Head of caudate nucleus (tissue), 42 donors: ENCODE measurements at regions of chr18 and their contacts with region 1.

Region 1: GRCh38 chr18:48859311-48860268 is 91.2 kb downstream of the SMAD7 start:
- DNase-seq: peak; percentile 79 to 96 (median 91)

Region 2: DNA sequence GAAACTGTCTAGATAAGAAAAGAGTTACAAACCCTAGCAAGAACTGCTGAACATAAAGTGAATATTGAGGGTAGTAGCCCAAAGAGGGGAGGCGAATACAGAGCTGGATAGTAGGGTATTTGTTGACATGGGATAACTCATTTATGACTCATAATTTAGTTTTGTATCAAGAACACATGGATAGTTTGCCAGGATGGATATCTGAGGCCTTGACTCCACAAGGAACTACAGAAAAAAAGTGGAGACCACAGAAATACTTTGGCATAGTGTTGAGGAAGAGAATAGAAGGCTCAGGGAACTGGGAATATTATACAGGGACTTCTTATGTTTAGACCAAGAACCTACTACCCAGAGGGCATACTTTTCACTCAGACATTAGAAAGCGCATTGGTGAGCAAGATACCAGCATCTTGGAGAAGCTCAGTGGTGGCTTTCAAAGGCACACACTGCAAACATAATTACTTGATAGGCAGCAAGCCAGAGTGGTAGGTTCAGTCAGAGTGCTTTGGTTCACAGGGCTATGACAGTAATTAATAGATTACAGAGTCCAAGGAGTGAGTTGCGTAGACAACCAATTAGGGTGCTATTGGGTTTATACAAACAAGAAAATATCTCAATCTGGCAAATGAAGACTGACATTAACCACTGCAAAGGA is 398.5 kb before region 1 on chr18:
- intact Hi-C with region 1: no loop called
- DNase-seq: no peak

Region 3: GRCh38 chr18:49178736-49179135 is 319.1 kb after region 1 on chr18:
- intact Hi-C with region 1: loop called (anchors 10 kb)
- DNase-seq: peak in 31 of 42 donors; percentile 15 to 87 (median 52)